ENCODE measurements at regions of chr16 and their contacts with region 1.

Region 1: DNA sequence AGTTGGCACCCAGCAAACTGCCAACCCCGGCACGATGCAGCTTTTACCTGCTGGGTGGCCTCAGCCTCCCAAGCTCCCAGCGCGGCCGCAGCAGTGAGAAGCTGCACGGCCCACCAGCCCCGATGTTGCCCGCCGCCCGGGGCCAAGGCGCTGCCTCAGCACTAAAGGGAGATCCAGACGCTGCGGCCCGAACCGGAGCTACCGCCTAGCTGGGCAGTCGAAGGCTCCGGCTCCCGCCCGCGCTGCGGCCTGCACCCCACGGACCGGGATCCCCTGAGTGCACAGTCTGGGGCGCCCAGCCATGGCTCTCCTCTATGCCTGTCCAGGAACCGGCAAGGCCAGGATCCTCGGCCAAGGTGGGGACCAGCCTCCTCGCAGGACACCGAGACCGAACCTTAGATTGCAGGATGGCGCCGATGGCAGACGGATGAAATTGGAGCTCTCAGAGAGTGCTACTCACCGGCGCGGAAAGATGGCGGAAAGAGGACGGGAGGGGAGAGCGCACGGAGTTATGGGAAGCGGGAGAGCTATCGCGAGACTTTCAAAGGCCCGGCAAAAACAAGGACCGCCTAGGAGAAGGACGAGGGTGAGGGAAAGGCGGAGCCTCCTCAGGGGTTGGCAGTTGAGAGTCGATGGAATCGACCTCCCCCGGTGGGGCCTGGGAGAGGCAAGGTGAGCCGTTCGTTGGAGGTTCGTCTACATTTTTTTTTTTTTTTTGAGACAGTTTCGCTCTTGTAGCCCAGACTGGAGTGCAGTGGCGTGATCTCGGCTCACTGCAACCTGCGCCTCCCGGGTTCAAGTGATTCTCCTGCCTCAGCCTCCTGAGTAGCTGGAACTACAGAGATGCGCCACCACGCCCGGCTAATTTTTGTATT is at the start of gene RPS15A:
- DNase-seq: peak; percentile 78 to 97 (median 92)
- ATAC-seq: peak; percentile 96 to 97
- H3K4me3 Mint-ChIP-seq: peak within 1 kb of the TSS; percentile 94 to 99 (median 97)
- H3K27ac Mint-ChIP-seq: peak within 1 kb of the TSS; percentile 94 to 98 (median 96)
- H3K4me1 Mint-ChIP-seq: peaks cover 25 to 53% (median 51%) of the 10 kb centered on the region in 4 donors
- H3K27me3 Mint-ChIP-seq: no peaks in the 10 kb centered on the region
- polyA plus RNA-seq, gene RPS15A: 4,112 to 5,165 (median 4,927) TPM

Region 2: GRCh38 chr16:18801197-18801972 is 11.3 kb after region 1 on chr16 and contains the start of gene ARL6IP1:
- POLR2A ChIA-PET with region 1: interaction called, 106 read pairs
- DNase-seq: peak; percentile 96 to 99 (median 99)
- ATAC-seq: peak; percentile 93 to 94
- H3K4me3 Mint-ChIP-seq: peak within 1 kb of the TSS; percentile 89 to 99 (median 95)
- H3K27ac Mint-ChIP-seq: peak within 1 kb of the TSS; percentile 93 to 98 (median 96)
- H3K4me1 Mint-ChIP-seq: peaks cover 21 to 68% (median 47%) of the 10 kb centered on the region in 4 donors
- H3K27me3 Mint-ChIP-seq: no peaks in the 10 kb centered on the region
- polyA plus RNA-seq, gene ARL6IP1: 157 to 210 (median 169) TPM

Region 3: GRCh38 chr16:18833707-18834500 is 43.8 kb after region 1 on chr16:
- POLR2A ChIA-PET with region 1: no interaction called
- DNase-seq: no peak
- ATAC-seq: no peak
- H3K4me3 Mint-ChIP-seq: no peak overlapping the region
- H3K27ac Mint-ChIP-seq: peak overlapping the region in 2 of 10 donors; percentile 53 to 58
- H3K4me1 Mint-ChIP-seq: no peaks in the 10 kb centered on the region
- H3K27me3 Mint-ChIP-seq: no peaks in the 10 kb centered on the region

Region 4: GRCh38 chr16:18931756-18932155 is 141.7 kb after region 1 on chr16:
- POLR2A ChIA-PET with region 1: interaction called, 10 read pairs
- DNase-seq: no peak
- ATAC-seq: no peak
- H3K4me3 Mint-ChIP-seq: no peak overlapping the region
- H3K27ac Mint-ChIP-seq: peak overlapping the region in 2 of 10 donors; percentile 25 to 69
- H3K4me1 Mint-ChIP-seq: peaks cover 1 to 7% (median 5%) of the 10 kb centered on the region in 4 donors
- H3K27me3 Mint-ChIP-seq: no peaks in the 10 kb centered on the region

Region 5: DNA sequence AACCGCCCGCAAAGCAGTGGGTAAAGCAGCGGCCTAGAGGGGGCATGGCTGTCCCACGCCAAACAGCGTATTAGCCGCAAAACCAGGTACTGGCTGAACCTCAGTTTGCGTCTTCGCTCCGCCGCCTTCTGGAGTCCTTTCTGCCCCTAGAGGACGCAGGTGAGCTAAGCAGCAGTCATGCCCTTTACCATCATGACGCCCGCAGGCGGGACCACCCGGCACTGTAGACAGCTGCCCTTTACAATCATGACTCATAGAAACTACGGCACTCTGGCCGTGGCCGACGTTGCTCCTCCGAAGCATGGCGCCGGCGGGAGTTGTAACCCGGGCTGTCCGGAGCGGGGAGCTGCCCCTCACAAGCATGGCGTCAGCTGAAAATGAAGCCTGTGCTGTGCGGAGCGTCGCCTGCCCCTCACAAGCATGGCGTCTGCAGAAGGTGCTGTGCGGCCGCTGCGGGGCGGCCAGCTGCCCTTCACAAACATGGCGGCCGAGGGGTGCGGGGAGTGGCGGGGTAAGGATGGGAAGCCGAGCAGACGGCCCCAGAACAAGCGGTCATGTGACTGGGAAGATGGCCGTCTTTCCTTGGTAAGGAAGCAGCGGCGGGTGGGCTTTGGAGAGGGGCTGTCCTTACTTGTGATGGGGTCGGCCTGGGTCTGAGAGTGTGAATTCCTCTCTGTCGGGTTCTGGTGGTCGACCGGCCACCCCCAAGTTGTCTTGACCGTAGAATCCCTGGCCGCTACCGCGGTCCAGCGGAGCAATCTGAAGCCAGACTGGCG is 765.3 kb after region 1 on chr16 and contains the start of gene VPS35L:
- POLR2A ChIA-PET with region 1: interaction called, 12 read pairs
- DNase-seq: peak; percentile 90 to 98 (median 96)
- ATAC-seq: peak; percentile 93 to 94
- H3K4me3 Mint-ChIP-seq: peak within 1 kb of the TSS; percentile 91 to 99 (median 96)
- H3K27ac Mint-ChIP-seq: peak within 1 kb of the TSS; percentile 85 to 98 (median 96)
- H3K4me1 Mint-ChIP-seq: peaks cover 7 to 35% (median 18%) of the 10 kb centered on the region in 4 donors
- H3K27me3 Mint-ChIP-seq: no peaks in the 10 kb centered on the region
- polyA plus RNA-seq, gene VPS35L: 41.6 to 53.7 (median 44.6) TPM